ENCODE measurements at regions of chr22 and their contacts with region 1.

Region 1: GRCh38 chr22:31630331-31631329 is 31.4 kb downstream of the PISD start:
- DNase-seq: peak; percentile 79 to 95
- H3K4me3 ChIP-seq: peak overlapping the region; percentile 66 to 81 (median 79)
- H3K27ac ChIP-seq: peak overlapping the region; percentile 80 to 93 (median 91)
- H3K4me1 ChIP-seq: peaks cover 53 to 86% (median 78%) of the 10 kb centered on the region in 4 donors
- H3K27me3 ChIP-seq: no peaks in the 10 kb centered on the region
- CTCF ChIP-seq: peak in 1 of 7 experiments; percentile 11
- EP300 ChIP-seq: no peak
- POLR2A ChIP-seq: no peak

Region 2: GRCh38 chr22:31561238-31561887 is 69.3 kb before region 1 on chr22:
- intact Hi-C with region 1: loop called (anchors 5 kb)
- DNase-seq: peak; percentile 83 to 94
- H3K4me3 ChIP-seq: no peak overlapping the region
- H3K27ac ChIP-seq: peak overlapping the region in 1 of 5 donors; percentile 4
- H3K4me1 ChIP-seq: peaks cover 0 to 9% (median 0%) of the 10 kb centered on the region in 4 donors
- H3K27me3 ChIP-seq: no peaks in the 10 kb centered on the region
- CTCF ChIP-seq: peak in 5 of 7 experiments; percentile 49 to 77 (median 59)
- EP300 ChIP-seq: no peak
- POLR2A ChIP-seq: no peak

Region 3: GRCh38 chr22:32175683-32176644 is 545.3 kb after region 1 on chr22:
- intact Hi-C with region 1: no loop called
- DNase-seq: peak in 1 of 2 donors; percentile 22
- H3K4me3 ChIP-seq: no peak overlapping the region
- H3K27ac ChIP-seq: no peak overlapping the region
- H3K4me1 ChIP-seq: peaks cover 0 to 10% (median 6%) of the 10 kb centered on the region in 4 donors
- H3K27me3 ChIP-seq: peaks cover 14 to 78% (median 46%) of the 10 kb centered on the region in 3 donors
- CTCF ChIP-seq: no peak
- EP300 ChIP-seq: no peak
- POLR2A ChIP-seq: no peak

Measured in stomach (tissue), 19 donors.